ENCODE measurements at regions of chr5 and their contacts with region 1.

Region 1: GRCh38 chr5:38922199-38922598 is 76.4 kb downstream of the OSMR start:
- DNase-seq: peak; percentile 66
- H3K4me3 Mint-ChIP-seq: no peak overlapping the region
- H3K27ac Mint-ChIP-seq: no peak overlapping the region
- H3K4me1 Mint-ChIP-seq: no peaks in the 10 kb centered on the region
- H3K27me3 Mint-ChIP-seq: no peaks in the 10 kb centered on the region
- CTCF ChIP-seq: peak; percentile 81

Region 2: DNA sequence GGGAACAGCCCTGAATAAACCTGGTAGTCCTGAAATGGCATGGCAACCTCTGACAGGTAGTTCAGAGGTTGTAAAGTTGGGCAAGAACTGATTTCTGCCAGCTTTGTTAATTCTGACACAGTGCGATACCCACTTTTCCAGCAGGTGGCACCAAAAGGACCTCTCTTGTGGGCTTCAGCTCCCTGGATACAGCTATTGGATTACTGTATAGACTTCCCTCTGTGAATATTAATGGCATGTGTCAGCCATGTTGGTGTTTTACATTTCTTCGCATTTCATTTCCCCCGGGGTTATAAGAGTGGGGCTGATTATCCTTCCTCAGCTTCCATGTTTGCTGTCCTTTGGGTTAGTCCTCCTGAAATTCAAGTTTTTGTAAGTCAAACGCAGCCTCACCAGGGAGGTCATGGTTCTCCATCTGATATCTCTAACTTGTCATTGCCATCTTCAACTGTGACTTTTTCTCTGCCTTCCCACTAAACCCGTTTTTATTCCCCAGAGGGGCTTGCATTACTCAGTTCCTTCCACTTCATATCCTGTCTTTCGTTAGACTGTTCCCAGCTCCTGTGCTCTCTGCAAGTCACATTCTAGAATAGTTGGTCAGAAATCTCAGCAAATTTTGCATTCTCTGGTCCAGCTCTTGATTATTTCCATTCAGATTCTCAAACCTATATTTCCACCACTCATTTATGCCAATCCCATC is 501.4 kb before region 1 on chr5:
- CTCF ChIA-PET with region 1: no interaction called
- intact Hi-C with region 1: loop called (anchors 1 kb)
- DNase-seq: peak; percentile 63
- H3K4me3 Mint-ChIP-seq: no peak overlapping the region
- H3K27ac Mint-ChIP-seq: no peak overlapping the region
- H3K4me1 Mint-ChIP-seq: no peaks in the 10 kb centered on the region
- H3K27me3 Mint-ChIP-seq: peaks cover 70% of the 10 kb centered on the region
- CTCF ChIP-seq: peak; percentile 74

Region 3: GRCh38 chr5:38831909-38832308 is 90.3 kb before region 1 on chr5:
- CTCF ChIA-PET with region 1: no interaction called
- intact Hi-C with region 1: loop called (anchors 2 kb)
- DNase-seq: no peak
- H3K4me3 Mint-ChIP-seq: no peak overlapping the region
- H3K27ac Mint-ChIP-seq: peak overlapping the region; percentile 20
- H3K4me1 Mint-ChIP-seq: peaks cover 30% of the 10 kb centered on the region
- H3K27me3 Mint-ChIP-seq: no peaks in the 10 kb centered on the region
- CTCF ChIP-seq: peak; percentile 59

Region 4: DNA sequence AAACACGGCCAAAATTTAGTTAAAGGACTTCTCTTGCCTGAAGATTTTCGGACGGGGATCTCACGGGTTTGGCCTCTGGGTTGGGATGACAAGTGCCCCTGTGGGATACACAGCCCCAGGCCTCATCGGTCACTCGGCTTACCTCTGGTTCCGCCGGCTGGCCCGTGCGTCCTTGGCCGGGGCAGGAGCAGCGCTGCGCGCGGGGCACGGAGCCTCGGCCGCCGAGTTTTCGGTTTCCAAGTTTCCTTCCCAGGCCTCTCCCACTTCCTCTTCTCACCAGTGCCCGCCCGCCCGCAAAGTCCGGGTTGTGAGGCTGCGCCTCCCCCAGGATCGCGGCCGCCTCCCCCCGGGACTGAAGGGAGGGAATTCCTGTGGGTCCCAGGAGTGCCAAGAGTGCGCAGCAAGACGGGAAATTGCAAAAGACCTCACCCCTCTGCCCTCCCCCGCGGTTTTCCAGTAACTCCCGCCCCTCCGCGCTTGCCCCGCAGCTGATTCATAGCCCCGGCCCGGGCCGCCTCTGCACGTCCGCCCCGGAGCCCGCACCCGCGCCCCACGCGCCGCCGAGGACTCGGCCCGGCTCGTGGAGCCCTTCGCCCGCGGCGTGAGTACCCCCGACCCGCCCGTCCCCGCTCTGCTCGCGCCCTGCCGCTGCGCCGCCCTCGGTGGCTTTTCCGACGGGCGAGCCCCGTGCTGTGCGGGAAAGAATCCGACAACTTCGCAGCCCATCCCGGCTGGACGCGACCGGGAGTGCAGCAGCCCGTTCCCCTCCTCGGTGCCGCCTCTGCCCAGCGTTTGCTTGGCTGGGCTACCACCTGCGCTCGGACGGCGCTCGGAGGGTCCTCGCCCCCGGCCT is 76.4 kb before region 1 on chr5 and contains the start of gene OSMR:
- CTCF ChIA-PET with region 1: no interaction called
- intact Hi-C with region 1: loop called (anchors 5 kb)
- DNase-seq: peak; percentile 93
- H3K4me3 Mint-ChIP-seq: peak within 1 kb of the TSS; percentile 89
- H3K27ac Mint-ChIP-seq: peak within 1 kb of the TSS; percentile 94
- H3K4me1 Mint-ChIP-seq: peaks cover 26% of the 10 kb centered on the region
- H3K27me3 Mint-ChIP-seq: no peaks in the 10 kb centered on the region
- CTCF ChIP-seq: peak; percentile 12
- total RNA-seq, gene OSMR: 59.8 and 76.4 TPM in 2 replicates

Region 5: GRCh38 chr5:39040875-39041274 is 118.7 kb after region 1 on chr5:
- CTCF ChIA-PET with region 1: no interaction called
- intact Hi-C with region 1: no loop called
- DNase-seq: no peak
- H3K4me3 Mint-ChIP-seq: no peak overlapping the region
- H3K27ac Mint-ChIP-seq: peak overlapping the region; percentile 40
- H3K4me1 Mint-ChIP-seq: peaks cover 9% of the 10 kb centered on the region
- H3K27me3 Mint-ChIP-seq: no peaks in the 10 kb centered on the region
- CTCF ChIP-seq: no peak

Region 6: GRCh38 chr5:39058178-39058921 is 136.2 kb after region 1 on chr5:
- CTCF ChIA-PET with region 1: no interaction called
- intact Hi-C with region 1: no loop called
- DNase-seq: no peak
- H3K4me3 Mint-ChIP-seq: no peak overlapping the region
- H3K27ac Mint-ChIP-seq: no peak overlapping the region
- H3K4me1 Mint-ChIP-seq: peaks cover 19% of the 10 kb centered on the region
- H3K27me3 Mint-ChIP-seq: no peaks in the 10 kb centered on the region
- CTCF ChIP-seq: no peak